HCT116 (cell line): ENCODE measurements at regions of chr1 and their contacts with region 1.

Region 1: DNA sequence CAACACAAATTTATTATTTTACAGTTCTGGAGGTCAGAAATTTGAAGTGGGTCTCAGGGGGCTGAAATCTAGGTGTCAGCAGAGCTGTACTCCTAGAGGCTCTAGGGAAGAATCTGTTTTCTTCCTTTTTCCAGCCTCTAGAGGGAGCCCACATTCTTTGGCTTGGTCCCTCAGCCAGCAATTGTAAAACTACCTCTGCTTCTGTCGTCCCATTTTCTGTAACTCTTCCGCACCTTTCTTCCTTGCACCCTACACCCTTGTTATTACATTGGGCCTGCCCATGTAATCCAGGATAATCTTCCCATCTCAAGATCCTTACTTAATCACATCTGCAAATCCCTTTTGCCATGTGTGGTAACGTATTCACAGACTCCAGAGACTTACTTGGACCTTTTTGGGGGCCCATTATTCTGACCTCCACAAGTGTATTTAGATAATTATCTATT is 24.8 kb upstream of the THEM4 start:
- DNase-seq: no peak
- ATAC-seq: peak; percentile 97
- H3K4me3 ChIP-seq: no peak overlapping the region
- H3K27ac ChIP-seq: no peak overlapping the region
- H3K4me1 ChIP-seq: no peaks in the 10 kb centered on the region; a peak in 1 of 4 replicates
- H3K27me3 ChIP-seq: no peaks in the 10 kb centered on the region
- CTCF ChIP-seq: peak; percentile 86 to 95 (median 86)
- POLR2A ChIP-seq: no peak
- RAD21 ChIP-seq: peak; percentile 96

Region 2: GRCh38 chr1:151909150-151910149 is 24.6 kb before region 1 on chr1 and contains the start of gene THEM4:
- CTCF ChIA-PET with region 1: interaction called, 11 read pairs
- POLR2A ChIA-PET with region 1: no interaction called
- RAD21 ChIA-PET with region 1: no interaction called
- intact Hi-C with region 1: no loop called
- DNase-seq: peak; percentile 92
- ATAC-seq: peak; percentile 95
- H3K4me3 ChIP-seq: peak within 1 kb of the TSS; percentile 86 to 87
- H3K27ac ChIP-seq: peak within 1 kb of the TSS; percentile 74
- H3K4me1 ChIP-seq: peaks cover 7 to 14% of the 10 kb centered on the region in 2 experiments; a peak in 3 of 4 replicates
- H3K27me3 ChIP-seq: no peaks in the 10 kb centered on the region
- CTCF ChIP-seq: no peak
- POLR2A ChIP-seq: peak; percentile 92
- RAD21 ChIP-seq: no peak
- total RNA-seq, gene THEM4: 17.0 TPM

Region 3: GRCh38 chr1:151968058-151968457 is 34.0 kb after region 1 on chr1:
- CTCF ChIA-PET with region 1: interaction called, 31 read pairs
- POLR2A ChIA-PET with region 1: no interaction called
- RAD21 ChIA-PET with region 1: interaction called, 3 read pairs
- intact Hi-C with region 1: loop called (anchors 1 kb)
- DNase-seq: no peak
- ATAC-seq: peak; percentile 71
- H3K4me3 ChIP-seq: no peak overlapping the region
- H3K27ac ChIP-seq: no peak overlapping the region
- H3K4me1 ChIP-seq: peaks cover 35 to 50% of the 10 kb centered on the region in 2 experiments; a peak in 3 of 4 replicates
- H3K27me3 ChIP-seq: no peaks in the 10 kb centered on the region
- CTCF ChIP-seq: peak; percentile 79 to 91 (median 85)
- POLR2A ChIP-seq: no peak
- RAD21 ChIP-seq: peak; percentile 98

Region 4: DNA sequence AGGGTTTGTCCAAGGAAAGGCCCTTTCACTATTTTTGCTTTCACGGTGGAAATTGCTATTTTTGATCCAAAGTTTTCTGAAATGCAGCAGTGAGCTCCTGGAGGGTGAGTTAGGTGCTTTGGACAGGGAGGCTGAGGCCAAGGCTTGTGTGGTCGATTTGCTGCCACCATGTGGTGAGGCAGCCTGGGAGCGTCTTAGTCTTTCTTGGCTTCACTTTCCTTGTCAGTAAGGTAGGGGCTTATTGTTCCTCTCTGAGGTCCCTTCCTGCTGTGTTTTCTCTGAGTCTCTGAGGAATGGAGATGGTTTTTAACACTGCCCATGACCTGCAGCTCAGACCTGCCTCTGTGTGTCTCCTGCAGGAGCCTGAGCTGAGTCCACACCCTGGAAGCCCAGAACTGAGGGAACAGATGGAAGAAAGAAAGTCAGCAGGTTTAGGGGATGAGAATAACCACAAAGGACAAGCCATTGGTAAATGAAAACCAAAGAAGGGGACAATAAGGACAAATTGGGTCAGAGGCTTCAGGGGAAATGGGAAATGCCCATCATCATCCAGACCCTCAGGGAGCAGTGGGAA is 79.7 kb after region 1 on chr1:
- CTCF ChIA-PET with region 1: interaction called, 10 read pairs
- POLR2A ChIA-PET with region 1: no interaction called
- RAD21 ChIA-PET with region 1: interaction called in 1 of 2 experiments, 3 read pairs
- intact Hi-C with region 1: no loop called
- DNase-seq: no peak
- ATAC-seq: peak; percentile 83
- H3K4me3 ChIP-seq: no peak overlapping the region
- H3K27ac ChIP-seq: no peak overlapping the region
- H3K4me1 ChIP-seq: peaks cover 0 to 4% of the 10 kb centered on the region in 2 experiments; a peak in 1 of 4 replicates
- H3K27me3 ChIP-seq: no peaks in the 10 kb centered on the region
- CTCF ChIP-seq: peak; percentile 61 to 94 (median 84); a peak in 5 of 6 replicates
- POLR2A ChIP-seq: no peak
- RAD21 ChIP-seq: peak; percentile 62

Region 5: GRCh38 chr1:152034646-152035405 is 100.8 kb after region 1 on chr1:
- CTCF ChIA-PET with region 1: interaction called, 18 read pairs
- POLR2A ChIA-PET with region 1: no interaction called
- RAD21 ChIA-PET with region 1: no interaction called
- intact Hi-C with region 1: no loop called
- DNase-seq: peak; percentile 79
- ATAC-seq: peak; percentile 62
- H3K4me3 ChIP-seq: peak overlapping the region; percentile 64 to 70
- H3K27ac ChIP-seq: peak overlapping the region; percentile 79
- H3K4me1 ChIP-seq: peaks cover 19 to 28% of the 10 kb centered on the region in 2 experiments
- H3K27me3 ChIP-seq: no peaks in the 10 kb centered on the region
- CTCF ChIP-seq: peak; percentile 52 to 79 (median 78); a peak in 5 of 6 replicates
- POLR2A ChIP-seq: no peak
- RAD21 ChIP-seq: peak; percentile 53